Dorsolateral prefrontal cortex (tissue), 120 donors: ENCODE measurements at regions of chrX and their contacts with region 1.

Region 1: DNA sequence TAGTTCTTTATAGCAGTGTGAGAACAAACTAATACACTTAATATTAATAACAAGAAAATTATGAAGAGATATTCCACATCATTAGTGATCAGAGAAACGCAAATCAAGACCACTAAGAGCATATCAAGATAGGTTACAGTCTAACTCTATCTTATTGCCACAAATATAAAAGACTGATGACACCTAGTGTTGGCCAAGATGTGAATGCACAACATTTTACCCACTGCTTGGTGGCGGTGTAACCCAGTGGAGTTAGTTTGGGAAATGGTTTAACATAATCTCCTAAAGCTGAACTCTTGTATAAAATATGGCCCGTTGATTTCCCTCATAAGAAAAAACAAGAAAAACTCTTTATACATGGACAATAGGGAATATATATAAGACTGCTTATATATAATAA is 92.4 kb downstream of the SLITRK2 start:
- DNase-seq: no peak
- H3K4me3 ChIP-seq: no peak overlapping the region
- H3K27ac ChIP-seq: no peak overlapping the region
- H3K27me3 ChIP-seq: peaks cover 0 to 17% (median 0%) of the 10 kb centered on the region in 45 donors
- CTCF ChIP-seq: peak in 51 of 56 donors; percentile 16 to 70 (median 44)

Region 2: DNA sequence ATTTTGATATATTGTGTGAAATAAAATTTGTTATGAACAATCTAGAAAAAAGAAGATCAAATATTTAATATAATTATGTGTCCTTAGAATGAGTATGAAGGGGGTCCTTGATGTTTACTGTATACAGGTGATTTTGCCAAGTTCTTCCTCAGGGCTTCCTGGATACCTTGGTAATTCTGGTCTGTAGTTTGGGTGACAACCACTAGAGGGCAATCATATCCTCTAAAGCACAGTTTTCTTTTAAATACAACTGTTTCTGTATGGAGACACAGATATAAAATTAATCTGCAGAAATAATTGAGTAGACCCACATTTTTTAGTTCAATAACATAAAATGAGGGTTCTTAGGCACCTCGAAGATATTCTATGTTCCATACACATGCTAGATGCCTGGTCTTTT is 505.0 kb before region 1 on chrX:
- intact Hi-C with region 1: loop called in 1 of 2 experiments (anchors 10 kb)
- DNase-seq: no peak
- H3K4me3 ChIP-seq: no peak overlapping the region
- H3K27ac ChIP-seq: no peak overlapping the region
- H3K27me3 ChIP-seq: peaks cover 0 to 30% (median 4%) of the 10 kb centered on the region in 45 donors
- CTCF ChIP-seq: peak; percentile 32 to 85 (median 70)

Region 3: DNA sequence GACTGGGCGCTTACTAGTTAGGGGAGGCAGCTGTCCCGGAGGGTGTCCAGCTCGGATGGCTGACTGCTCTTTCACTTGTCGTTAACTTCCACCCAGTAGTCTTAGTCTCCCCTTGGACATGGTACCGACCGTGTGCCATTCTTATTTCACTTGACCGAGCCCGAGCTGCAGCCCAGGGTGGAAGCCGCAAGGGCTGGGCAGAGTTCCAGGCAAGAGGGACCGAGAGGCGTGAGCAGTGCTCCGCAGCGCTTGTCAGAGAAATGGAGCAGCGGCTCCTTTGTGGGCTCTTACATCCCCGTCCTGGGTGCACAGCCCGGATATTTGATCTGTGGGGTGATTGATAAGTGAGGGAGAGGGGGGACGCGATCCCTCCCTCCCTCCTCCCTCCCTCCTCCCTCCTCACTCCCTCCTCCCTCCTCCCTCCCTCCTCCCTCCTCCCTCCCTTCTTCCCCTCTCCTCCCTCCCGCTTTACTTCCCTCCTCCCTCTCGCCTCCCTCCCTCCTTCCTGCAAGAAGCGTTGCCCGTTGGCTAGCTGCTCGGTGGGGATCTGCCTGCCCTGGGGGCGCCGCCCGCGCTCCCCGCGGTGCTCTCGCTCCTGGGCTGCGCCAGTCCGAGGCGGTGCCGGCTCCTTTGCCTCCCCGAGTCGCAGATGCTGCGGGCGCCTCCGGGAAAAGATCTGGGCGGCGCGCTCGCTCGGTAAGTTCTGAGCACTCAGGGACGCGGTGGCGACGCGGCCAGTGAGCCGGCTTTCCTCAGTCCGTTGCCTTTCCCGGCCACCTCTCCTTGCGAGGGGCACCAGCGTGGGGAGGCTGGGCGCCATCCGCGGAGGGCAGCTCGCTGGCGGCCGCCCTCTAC is 92.5 kb before region 1 on chrX and contains the start of gene SLITRK2:
- intact Hi-C with region 1: loop called in 1 of 2 experiments (anchors 5 kb)
- DNase-seq: peak in 6 of 10 donors; percentile 51 to 70 (median 58)
- H3K4me3 ChIP-seq: peak within 1 kb of the TSS; percentile 29 to 79 (median 64)
- H3K27ac ChIP-seq: peak within 1 kb of the TSS in 58 of 59 donors; percentile 9 to 91 (median 84)
- H3K27me3 ChIP-seq: peaks cover 0 to 66% (median 16%) of the 10 kb centered on the region in 45 donors
- CTCF ChIP-seq: no peak
- total RNA-seq, gene SLITRK2: 16.2 to 37.4 (median 25.2) TPM

Region 4: GRCh38 chrX:145825896-145826295 is 84.1 kb before region 1 on chrX:
- intact Hi-C with region 1: loop called (anchors 2 to 5 kb)
- DNase-seq: peak in 1 of 10 donors; percentile 64
- H3K4me3 ChIP-seq: peak overlapping the region in 51 of 59 donors; percentile 2 to 72 (median 47)
- H3K27ac ChIP-seq: peak overlapping the region in 56 of 59 donors; percentile 16 to 90 (median 76)
- H3K27me3 ChIP-seq: peaks cover 0 to 67% (median 12%) of the 10 kb centered on the region in 45 donors
- CTCF ChIP-seq: peak in 55 of 56 donors; percentile 29 to 73 (median 53)